Activated CD8-positive, alpha-beta T cell treated with anti-CD3 and anti-CD28 coated beads, Interleukin-2, amount 10 ng/mL, durations not matched to agents 7 days and 5 days (primary cell): ENCODE measurements at regions of chr11 and their contacts with region 1.

Region 1: DNA sequence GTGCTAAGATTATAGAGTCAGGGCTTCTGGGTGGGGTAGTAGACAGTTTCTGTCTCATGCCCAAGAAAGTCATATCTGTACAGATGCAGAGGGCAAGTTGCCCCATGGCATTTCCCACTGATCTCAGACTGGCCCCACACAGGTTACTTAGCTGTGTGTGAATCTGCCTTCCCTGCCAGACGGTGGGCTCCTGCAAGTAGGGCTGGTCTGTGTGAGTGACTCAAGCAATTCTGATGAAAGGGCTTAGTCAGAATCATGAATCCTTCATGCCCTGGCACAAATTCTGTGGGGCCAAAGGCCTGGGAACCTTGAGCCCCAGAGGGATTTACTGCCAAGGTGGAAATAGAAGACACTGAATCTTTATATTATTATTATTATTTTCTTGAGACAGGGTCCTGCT is 30.4 kb downstream of the USH1C start:
- DNase-seq: no peak
- ATAC-seq: no peak
- H3K4me3 Mint-ChIP-seq: no peak overlapping the region
- H3K27ac Mint-ChIP-seq: no peak overlapping the region
- H3K4me1 Mint-ChIP-seq: no peaks in the 10 kb centered on the region
- H3K27me3 Mint-ChIP-seq: peaks cover 23% of the 10 kb centered on the region

Region 2: DNA sequence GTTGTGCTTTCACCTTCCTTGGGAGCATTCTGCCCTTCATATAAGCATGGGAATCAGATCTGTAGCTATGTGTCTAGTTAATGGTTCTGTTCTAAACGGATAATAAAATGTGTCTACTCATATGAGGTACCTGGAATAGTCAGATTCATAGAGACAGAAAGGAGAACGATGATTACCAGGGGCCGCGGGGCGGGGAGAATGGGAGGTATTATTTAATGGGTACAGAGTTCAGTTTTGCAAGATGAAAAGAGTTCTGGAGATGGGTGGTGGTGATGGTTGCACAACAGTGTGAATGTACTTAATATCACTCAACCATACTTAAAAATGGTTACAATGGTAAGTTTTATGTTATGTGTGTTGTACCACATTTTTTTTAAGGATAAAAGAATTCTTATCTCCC is 27.2 kb before region 1 on chr11:
- CTCF ChIA-PET with region 1: no interaction called
- POLR2A ChIA-PET with region 1: no interaction called
- DNase-seq: no peak
- ATAC-seq: no peak
- H3K4me3 Mint-ChIP-seq: no peak overlapping the region
- H3K27ac Mint-ChIP-seq: no peak overlapping the region
- H3K4me1 Mint-ChIP-seq: no peaks in the 10 kb centered on the region
- H3K27me3 Mint-ChIP-seq: peaks cover 18% of the 10 kb centered on the region

Region 3: DNA sequence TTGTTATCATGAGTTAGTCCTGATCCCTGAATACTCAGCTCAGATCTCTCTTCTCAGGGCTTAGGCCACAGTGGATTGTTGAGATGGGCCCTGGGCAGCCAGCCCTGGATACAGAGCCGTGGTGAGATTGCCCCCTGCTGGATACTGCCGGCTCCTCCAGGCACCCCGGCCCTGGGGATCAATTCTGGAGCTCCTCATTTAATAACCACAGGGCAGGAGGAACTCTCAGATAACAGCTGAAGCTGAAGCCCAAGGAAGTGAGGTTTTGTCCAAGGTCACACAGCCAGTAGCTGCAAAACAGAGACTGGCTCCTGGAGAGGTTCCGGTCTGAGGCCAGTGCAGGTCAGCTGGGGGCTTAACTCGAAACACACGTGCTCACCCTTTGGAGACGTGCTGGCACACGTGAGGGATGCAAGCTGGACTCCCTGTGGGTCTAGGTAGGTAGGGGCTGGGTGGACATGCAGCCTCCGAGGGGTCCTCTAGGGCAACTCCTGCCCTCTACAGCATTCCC is 14.4 kb after region 1 on chr11:
- CTCF ChIA-PET with region 1: interaction called, 17 read pairs
- POLR2A ChIA-PET with region 1: no interaction called
- DNase-seq: peak; percentile 65
- ATAC-seq: peak; percentile 88
- H3K4me3 Mint-ChIP-seq: no peak overlapping the region
- H3K27ac Mint-ChIP-seq: no peak overlapping the region
- H3K4me1 Mint-ChIP-seq: no peaks in the 10 kb centered on the region
- H3K27me3 Mint-ChIP-seq: peaks cover 4% of the 10 kb centered on the region

Region 4: GRCh38 chr11:17730608-17731462 is 217.0 kb after region 1 on chr11:
- CTCF ChIA-PET with region 1: no interaction called
- POLR2A ChIA-PET with region 1: no interaction called
- DNase-seq: peak; percentile 74
- ATAC-seq: peak; percentile 78
- H3K4me3 Mint-ChIP-seq: no peak overlapping the region
- H3K27ac Mint-ChIP-seq: no peak overlapping the region
- H3K4me1 Mint-ChIP-seq: peaks cover 3% of the 10 kb centered on the region
- H3K27me3 Mint-ChIP-seq: peaks cover 44% of the 10 kb centered on the region

Region 5: GRCh38 chr11:17972987-17973386 is 459.1 kb after region 1 on chr11:
- CTCF ChIA-PET with region 1: no interaction called
- POLR2A ChIA-PET with region 1: no interaction called
- DNase-seq: no peak
- ATAC-seq: no peak
- H3K4me3 Mint-ChIP-seq: no peak overlapping the region
- H3K27ac Mint-ChIP-seq: no peak overlapping the region
- H3K4me1 Mint-ChIP-seq: no peaks in the 10 kb centered on the region
- H3K27me3 Mint-ChIP-seq: no peaks in the 10 kb centered on the region